ENCODE measurements at regions of chr5 and their contacts with region 1.

Region 1: GRCh38 chr5:38202741-38203140 is 55.6 kb upstream of the EGFLAM start:
- DNase-seq: no peak
- ATAC-seq: no peak
- H3K4me3 Mint-ChIP-seq: no peak overlapping the region
- H3K27ac Mint-ChIP-seq: no peak overlapping the region
- H3K4me1 Mint-ChIP-seq: no peaks in the 10 kb centered on the region
- H3K27me3 Mint-ChIP-seq: peaks cover 7% of the 10 kb centered on the region

Region 2: GRCh38 chr5:38184627-38185026 is 18.1 kb before region 1 on chr5:
- CTCF ChIA-PET with region 1: interaction called, 5 read pairs
- POLR2A ChIA-PET with region 1: no interaction called
- intact Hi-C with region 1: loop called in 1 of 2 experiments (anchors 1 kb)
- DNase-seq: no peak
- ATAC-seq: no peak
- H3K4me3 Mint-ChIP-seq: no peak overlapping the region
- H3K27ac Mint-ChIP-seq: no peak overlapping the region
- H3K4me1 Mint-ChIP-seq: no peaks in the 10 kb centered on the region
- H3K27me3 Mint-ChIP-seq: peaks cover 6% of the 10 kb centered on the region